ENCODE measurements at regions of chr20 and their contacts with region 1.

Region 1: GRCh38 chr20:51639206-51639832 is 96.8 kb upstream of the NFATC2 start:
- DNase-seq: no peak
- ATAC-seq: peak; percentile 87
- H3K4me3 ChIP-seq: no peak overlapping the region
- H3K27ac ChIP-seq: no peak overlapping the region
- H3K4me1 ChIP-seq: no peaks in the 10 kb centered on the region
- H3K27me3 ChIP-seq: no peaks in the 10 kb centered on the region
- CTCF ChIP-seq: peak; percentile 74 to 88 (median 76)
- EP300 ChIP-seq: no peak
- POLR2A ChIP-seq: no peak
- RAD21 ChIP-seq: peak; percentile 64

Region 2: DNA sequence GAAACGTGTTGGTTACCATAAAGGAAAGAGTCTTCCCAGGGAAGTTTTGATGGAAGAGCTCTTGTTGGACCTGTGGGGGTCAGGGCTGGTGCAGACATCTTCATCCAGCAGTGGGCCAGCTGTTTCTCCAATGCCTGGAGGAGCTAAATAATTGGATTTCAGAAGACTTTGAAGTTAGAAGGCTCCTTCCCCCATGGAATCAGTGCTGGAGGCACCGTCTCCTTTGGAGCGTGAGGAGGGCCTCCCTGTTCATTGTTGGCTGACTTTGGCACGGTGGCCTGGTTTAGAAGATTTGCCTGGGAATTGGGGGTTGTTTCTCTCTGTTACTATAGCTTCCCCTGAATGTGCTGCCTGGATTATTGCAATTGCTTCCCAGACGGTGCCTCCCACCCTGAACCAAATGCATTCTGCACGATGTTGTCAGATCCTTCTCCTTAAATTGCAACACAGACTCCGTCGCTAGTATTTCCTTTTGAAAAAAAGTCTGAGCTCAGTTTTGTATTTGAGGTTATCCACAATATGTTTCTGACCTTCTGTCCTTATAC is 588.7 kb before region 1 on chr20:
- CTCF ChIA-PET with region 1: no interaction called
- POLR2A ChIA-PET with region 1: no interaction called
- RAD21 ChIA-PET with region 1: no interaction called
- SMC1A ChIA-PET with region 1: no interaction called
- in situ Hi-C with region 1: no loop called
- intact Hi-C with region 1: no loop called
- DNase-seq: no peak
- ATAC-seq: no peak
- H3K4me3 ChIP-seq: no peak overlapping the region
- H3K27ac ChIP-seq: no peak overlapping the region
- H3K4me1 ChIP-seq: no peaks in the 10 kb centered on the region
- H3K27me3 ChIP-seq: peaks cover 0 to 4% of the 10 kb centered on the region in 2 experiments; a peak in 1 of 4 replicates
- CTCF ChIP-seq: no peak
- EP300 ChIP-seq: no peak
- POLR2A ChIP-seq: no peak
- RAD21 ChIP-seq: no peak

Region 3: GRCh38 chr20:51661609-51662178 is 22.4 kb after region 1 on chr20:
- CTCF ChIA-PET with region 1: interaction called, 3 read pairs
- POLR2A ChIA-PET with region 1: interaction called, 10 read pairs
- RAD21 ChIA-PET with region 1: no interaction called
- SMC1A ChIA-PET with region 1: no interaction called
- in situ Hi-C with region 1: no loop called
- intact Hi-C with region 1: no loop called
- DNase-seq: no peak
- ATAC-seq: peak; percentile 88
- H3K4me3 ChIP-seq: no peak overlapping the region
- H3K27ac ChIP-seq: no peak overlapping the region
- H3K4me1 ChIP-seq: no peaks in the 10 kb centered on the region
- H3K27me3 ChIP-seq: no peaks in the 10 kb centered on the region; a peak in 1 of 4 replicates
- CTCF ChIP-seq: no peak
- EP300 ChIP-seq: no peak
- POLR2A ChIP-seq: no peak
- RAD21 ChIP-seq: no peak

Region 4: DNA sequence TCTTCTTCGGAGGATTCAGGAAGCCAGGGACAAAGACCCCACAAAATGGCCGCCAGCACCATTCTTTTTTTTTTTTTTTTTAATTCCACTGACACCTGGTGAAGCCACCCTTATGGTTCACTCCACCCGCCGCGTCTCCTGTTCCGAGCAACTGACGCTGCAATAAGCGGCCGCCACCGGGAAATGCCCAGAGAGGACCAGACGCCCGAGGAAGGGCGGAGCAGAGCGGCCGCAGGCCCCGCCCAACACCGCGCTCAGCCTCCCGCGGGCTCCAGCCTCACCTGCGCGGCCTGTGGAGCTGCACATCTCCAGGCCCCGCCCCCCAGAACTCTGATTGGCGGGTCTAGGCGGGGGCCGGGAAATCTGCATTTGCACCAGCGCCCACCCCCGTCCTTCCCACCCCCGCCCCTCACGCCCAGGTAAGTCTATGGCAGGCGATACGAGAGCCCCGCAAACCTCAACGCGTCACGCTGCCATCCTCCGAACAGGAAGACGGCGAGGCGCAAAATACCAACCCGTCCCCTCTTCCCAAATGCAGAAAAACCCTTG is 127.8 kb after region 1 on chr20:
- CTCF ChIA-PET with region 1: no interaction called
- POLR2A ChIA-PET with region 1: no interaction called
- RAD21 ChIA-PET with region 1: no interaction called
- SMC1A ChIA-PET with region 1: no interaction called
- in situ Hi-C with region 1: no loop called
- intact Hi-C with region 1: loop called (anchors 10 kb)
- DNase-seq: no peak
- ATAC-seq: peak; percentile 91
- H3K4me3 ChIP-seq: no peak overlapping the region
- H3K27ac ChIP-seq: no peak overlapping the region
- H3K4me1 ChIP-seq: no peaks in the 10 kb centered on the region
- H3K27me3 ChIP-seq: peaks cover 3 to 5% of the 10 kb centered on the region in 2 experiments; a peak in 2 of 4 replicates
- CTCF ChIP-seq: no peak
- EP300 ChIP-seq: no peak
- POLR2A ChIP-seq: no peak
- RAD21 ChIP-seq: no peak

Region 5: DNA sequence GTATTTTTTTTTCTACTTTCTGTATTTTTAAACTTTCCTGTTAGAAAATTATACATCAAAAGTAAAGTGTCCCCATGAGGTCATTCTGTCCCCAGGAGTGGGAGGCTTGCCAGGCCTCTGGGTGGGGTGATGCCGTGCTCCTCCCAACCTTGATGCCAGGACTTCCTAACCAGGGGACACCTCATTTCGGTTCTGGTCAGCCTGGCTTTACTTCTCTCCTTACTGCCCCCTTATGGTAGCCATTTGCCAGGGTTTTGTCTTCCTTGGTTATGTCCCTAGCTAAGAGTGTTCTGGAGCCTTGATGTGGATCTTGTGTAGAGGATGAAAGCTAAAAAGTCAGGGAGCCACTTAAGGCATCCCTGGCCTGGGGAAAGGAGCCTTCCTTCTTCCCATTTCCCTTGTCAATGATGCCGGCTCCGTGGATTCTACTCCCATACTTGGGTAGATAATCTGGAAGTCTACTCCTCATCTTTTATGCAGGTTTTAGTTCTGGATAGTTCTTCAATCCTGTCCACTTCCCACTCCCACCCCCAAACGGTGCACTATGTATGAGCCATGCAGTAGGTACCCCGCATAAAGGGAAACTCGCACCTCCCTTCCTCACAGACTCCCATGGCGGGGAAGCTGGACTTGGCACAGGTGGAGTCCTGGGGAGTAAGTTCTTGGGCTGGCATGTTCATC is 327.1 kb after region 1 on chr20:
- CTCF ChIA-PET with region 1: no interaction called
- POLR2A ChIA-PET with region 1: no interaction called
- RAD21 ChIA-PET with region 1: no interaction called
- SMC1A ChIA-PET with region 1: no interaction called
- in situ Hi-C with region 1: no loop called
- intact Hi-C with region 1: loop called (anchors 1 kb)
- DNase-seq: no peak
- ATAC-seq: peak; percentile 65
- H3K4me3 ChIP-seq: no peak overlapping the region
- H3K27ac ChIP-seq: no peak overlapping the region
- H3K4me1 ChIP-seq: no peaks in the 10 kb centered on the region
- H3K27me3 ChIP-seq: no peaks in the 10 kb centered on the region
- CTCF ChIP-seq: peak; percentile 44 to 53 (median 46); a peak in 5 of 6 replicates
- EP300 ChIP-seq: no peak
- POLR2A ChIP-seq: no peak
- RAD21 ChIP-seq: peak; percentile 21; the same call in 1 of the 2 replicates

Region 6: DNA sequence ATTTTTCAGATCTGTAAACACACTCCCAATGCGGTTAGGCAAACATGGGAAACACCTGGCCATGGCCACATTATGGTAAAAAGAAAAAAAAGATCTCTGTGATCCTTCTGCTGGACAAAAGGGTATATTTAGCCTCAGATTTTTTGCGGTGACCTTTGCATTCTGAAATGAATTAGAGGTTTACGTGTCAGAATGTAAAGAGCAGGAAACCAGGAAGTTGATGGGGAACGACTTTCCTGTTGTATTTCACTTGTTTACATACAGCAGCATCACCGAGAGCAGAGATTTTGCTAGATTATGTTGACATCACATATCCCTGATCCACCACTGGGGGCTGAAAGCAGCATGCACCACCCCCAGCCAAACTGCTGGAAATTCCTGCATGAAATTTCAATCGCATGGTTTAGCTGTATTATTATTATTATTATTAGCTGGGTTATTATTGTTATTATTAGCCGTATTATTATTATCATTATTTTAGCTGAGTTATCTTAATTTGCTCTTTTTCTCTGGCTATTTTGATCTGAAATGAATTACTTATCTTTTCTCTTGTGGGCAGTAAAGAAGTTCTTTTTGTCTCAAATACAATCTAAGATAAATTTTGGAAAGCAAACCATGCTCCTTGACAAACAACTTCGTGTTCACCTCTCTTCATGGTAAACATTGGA is 362.8 kb after region 1 on chr20:
- CTCF ChIA-PET with region 1: no interaction called
- POLR2A ChIA-PET with region 1: no interaction called
- RAD21 ChIA-PET with region 1: no interaction called
- SMC1A ChIA-PET with region 1: no interaction called
- in situ Hi-C with region 1: no loop called
- intact Hi-C with region 1: no loop called
- DNase-seq: no peak
- ATAC-seq: no peak
- H3K4me3 ChIP-seq: no peak overlapping the region
- H3K27ac ChIP-seq: no peak overlapping the region
- H3K4me1 ChIP-seq: no peaks in the 10 kb centered on the region
- H3K27me3 ChIP-seq: no peaks in the 10 kb centered on the region
- CTCF ChIP-seq: no peak
- EP300 ChIP-seq: no peak
- POLR2A ChIP-seq: no peak
- RAD21 ChIP-seq: no peak

Region 7: DNA sequence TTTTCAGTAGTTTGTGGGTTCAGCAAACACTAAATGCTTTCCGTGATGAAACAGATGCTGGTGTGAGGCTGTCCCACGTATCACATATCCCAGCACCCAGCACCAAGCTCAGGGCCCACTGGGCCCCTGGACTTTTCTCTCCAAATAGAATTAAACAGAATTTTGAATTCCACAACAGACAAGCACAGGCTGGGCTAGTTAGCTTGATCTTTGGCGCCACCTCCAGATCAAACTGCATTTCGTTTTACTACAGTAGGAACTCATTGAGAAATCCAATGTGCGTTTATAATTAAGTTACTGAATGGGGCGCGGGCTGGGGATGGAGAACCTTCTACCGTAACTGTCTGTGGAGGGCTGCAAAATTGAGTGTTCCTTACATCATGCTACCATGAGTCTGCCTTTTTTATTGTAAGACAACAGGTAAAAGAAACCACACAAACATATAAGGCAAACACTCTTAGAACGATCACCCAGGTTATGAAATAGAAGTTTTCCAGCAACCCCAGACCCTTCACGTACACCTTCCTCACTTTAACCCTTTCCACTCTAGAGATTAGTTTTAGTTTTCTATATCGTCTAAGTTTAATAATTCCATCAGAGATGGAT is 444.4 kb after region 1 on chr20:
- CTCF ChIA-PET with region 1: interaction called, 3 read pairs
- POLR2A ChIA-PET with region 1: no interaction called
- RAD21 ChIA-PET with region 1: no interaction called
- SMC1A ChIA-PET with region 1: no interaction called
- in situ Hi-C with region 1: no loop called
- intact Hi-C with region 1: loop called (anchors 2 kb)
- DNase-seq: no peak
- ATAC-seq: peak; percentile 34; the same call in 1 of the 3 replicates
- H3K4me3 ChIP-seq: no peak overlapping the region
- H3K27ac ChIP-seq: no peak overlapping the region
- H3K4me1 ChIP-seq: no peaks in the 10 kb centered on the region
- H3K27me3 ChIP-seq: no peaks in the 10 kb centered on the region
- CTCF ChIP-seq: peak; percentile 35 to 52 (median 40); a peak in 5 of 6 replicates
- EP300 ChIP-seq: no peak
- POLR2A ChIP-seq: no peak
- RAD21 ChIP-seq: peak; percentile 60

Region 8: GRCh38 chr20:52150440-52151258 is 511.3 kb after region 1 on chr20:
- CTCF ChIA-PET with region 1: no interaction called
- POLR2A ChIA-PET with region 1: no interaction called
- RAD21 ChIA-PET with region 1: no interaction called
- SMC1A ChIA-PET with region 1: no interaction called
- in situ Hi-C with region 1: no loop called
- intact Hi-C with region 1: loop called (anchors 1 kb)
- DNase-seq: peak; percentile 24
- ATAC-seq: peak; percentile 78
- H3K4me3 ChIP-seq: no peak overlapping the region
- H3K27ac ChIP-seq: no peak overlapping the region
- H3K4me1 ChIP-seq: no peaks in the 10 kb centered on the region
- H3K27me3 ChIP-seq: no peaks in the 10 kb centered on the region
- CTCF ChIP-seq: peak; percentile 74 to 82 (median 76)
- EP300 ChIP-seq: no peak
- POLR2A ChIP-seq: no peak
- RAD21 ChIP-seq: peak; percentile 71

Region 9: GRCh38 chr20:52379723-52380336 is 740.5 kb after region 1 on chr20:
- CTCF ChIA-PET with region 1: no interaction called
- POLR2A ChIA-PET with region 1: no interaction called
- RAD21 ChIA-PET with region 1: no interaction called
- SMC1A ChIA-PET with region 1: no interaction called
- in situ Hi-C with region 1: no loop called
- intact Hi-C with region 1: loop called (anchors 5 kb)
- DNase-seq: no peak
- ATAC-seq: no peak
- H3K4me3 ChIP-seq: no peak overlapping the region
- H3K27ac ChIP-seq: no peak overlapping the region
- H3K4me1 ChIP-seq: no peaks in the 10 kb centered on the region
- H3K27me3 ChIP-seq: no peaks in the 10 kb centered on the region
- CTCF ChIP-seq: peak; percentile 82 to 92 (median 90)
- EP300 ChIP-seq: no peak
- POLR2A ChIP-seq: no peak
- RAD21 ChIP-seq: peak; percentile 65